ENCODE measurements at regions of chr5 and their contacts with region 1.

Region 1: DNA sequence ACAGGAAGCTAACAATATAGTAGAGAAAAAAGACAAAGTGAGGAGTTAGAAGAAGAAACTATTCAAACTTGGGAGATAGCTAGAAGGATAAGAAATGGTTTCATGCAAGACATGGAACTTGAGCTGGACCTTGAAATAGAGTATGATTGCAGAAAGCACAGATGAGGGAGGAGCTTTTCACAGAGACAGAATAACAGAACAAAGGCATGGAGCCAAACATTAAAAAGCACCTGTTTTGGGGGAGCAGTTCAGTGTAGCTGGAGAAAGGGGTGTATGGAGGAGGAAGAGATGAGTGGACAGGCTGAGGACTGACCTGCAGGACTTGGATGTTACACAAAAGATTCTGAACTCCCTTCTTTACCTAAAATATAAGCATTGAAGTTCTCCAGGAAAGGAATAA is 25.2 kb downstream of the DTWD2 start:
- DNase-seq: no peak
- H3K4me3 ChIP-seq: no peak overlapping the region
- H3K27ac ChIP-seq: no peak overlapping the region
- H3K4me1 ChIP-seq: no peaks in the 10 kb centered on the region
- H3K27me3 ChIP-seq: no peaks in the 10 kb centered on the region
- CTCF ChIP-seq: no peak
- POLR2A ChIP-seq: no peak

Region 2: GRCh38 chr5:117461403-117461802 is 1501.8 kb before region 1 on chr5:
- CTCF ChIA-PET with region 1: no interaction called
- POLR2A ChIA-PET with region 1: no interaction called
- dilution Hi-C with region 1: no loop called
- intact Hi-C with region 1: loop called (anchors 5 kb)
- DNase-seq: no peak
- H3K4me3 ChIP-seq: no peak overlapping the region
- H3K27ac ChIP-seq: no peak overlapping the region
- H3K4me1 ChIP-seq: no peaks in the 10 kb centered on the region
- H3K27me3 ChIP-seq: no peaks in the 10 kb centered on the region
- CTCF ChIP-seq: no peak
- POLR2A ChIP-seq: no peak

Region 3: GRCh38 chr5:119105971-119106370 is 142.8 kb after region 1 on chr5:
- CTCF ChIA-PET with region 1: no interaction called
- POLR2A ChIA-PET with region 1: no interaction called
- dilution Hi-C with region 1: no loop called
- intact Hi-C with region 1: no loop called
- DNase-seq: no peak
- H3K4me3 ChIP-seq: no peak overlapping the region
- H3K27ac ChIP-seq: no peak overlapping the region
- H3K4me1 ChIP-seq: no peaks in the 10 kb centered on the region
- H3K27me3 ChIP-seq: no peaks in the 10 kb centered on the region
- CTCF ChIP-seq: no peak
- POLR2A ChIP-seq: no peak